ENCODE measurements at regions of chr12 and their contacts with region 1.

Region 1: GRCh38 chr12:106223485-106224354 is 24.1 kb downstream of the CKAP4 start:
- DNase-seq: peak in 41 of 42 donors; percentile 8 to 86 (median 67)

Region 2: DNA sequence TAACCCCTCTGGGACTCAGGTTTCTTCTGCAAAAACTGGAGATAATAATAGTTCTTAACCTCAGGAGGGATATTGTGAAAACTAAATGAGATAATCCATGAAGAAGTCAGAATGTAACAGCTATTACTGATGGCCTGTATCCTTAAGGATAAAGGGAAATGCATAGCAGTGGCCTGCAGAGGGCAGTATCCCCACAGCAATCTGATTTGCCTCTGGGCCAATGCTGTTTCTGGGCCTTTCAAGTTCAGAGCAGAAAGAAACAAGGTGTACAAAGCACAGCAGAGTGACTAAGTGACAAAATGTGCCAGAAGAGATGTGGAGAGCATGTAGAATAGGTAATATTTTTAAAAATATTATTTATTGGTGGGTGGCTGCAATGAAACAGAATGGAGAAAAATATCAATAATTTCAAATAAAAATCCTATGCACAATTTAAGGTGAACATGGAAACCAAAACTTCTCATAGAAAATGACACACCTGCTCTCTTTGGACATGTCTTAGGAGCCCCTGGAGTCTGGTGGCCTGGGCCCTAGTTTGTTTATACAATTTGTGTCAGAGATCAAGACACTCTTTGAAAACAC is 803.0 kb before region 1 on chr12:
- intact Hi-C with region 1: loop called (anchors 5 kb)
- DNase-seq: peak; percentile 62 to 91 (median 84)

Region 3: GRCh38 chr12:106149096-106149784 is 74.5 kb before region 1 on chr12:
- intact Hi-C with region 1: loop called (anchors 5 kb)
- DNase-seq: peak in 37 of 42 donors; percentile 21 to 80 (median 49)

Measured in head of caudate nucleus (tissue), 42 donors.